ENCODE measurements at regions of chr6 and their contacts with region 1.

Region 1: GRCh38 chr6:138537106-138537505 is 37.8 kb upstream of the NHSL1 start:
- H3K4me3 ChIP-seq: no peak overlapping the region
- H3K27ac ChIP-seq: no peak overlapping the region
- H3K4me1 ChIP-seq: 0 out of 2 replicates have a peak, but pooled peaks cover 3% of the 10 kb centered on the region
- CTCF ChIP-seq: no peak

Region 2: DNA sequence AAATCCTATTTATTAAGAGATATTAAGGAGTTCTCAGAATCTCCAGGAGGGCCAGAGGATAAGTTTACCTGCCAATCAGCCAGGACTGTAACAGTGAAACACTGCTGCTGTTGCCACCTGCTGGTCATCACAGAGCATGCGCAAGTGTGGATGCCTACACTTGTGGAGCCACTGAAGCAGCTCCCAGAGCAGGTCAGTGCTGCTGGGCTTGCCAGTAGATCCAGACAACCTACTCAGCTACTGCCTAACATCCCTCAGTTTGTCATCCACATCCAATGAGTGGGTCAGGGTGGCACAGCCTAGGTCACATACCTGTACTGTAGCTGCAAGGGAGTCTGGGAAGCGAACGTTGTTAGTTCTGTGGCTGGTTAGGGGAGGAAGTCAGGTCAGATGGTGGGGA is 19.5 kb before region 1 on chr6:
- CTCF ChIA-PET with region 1: interaction called, 12 read pairs
- POLR2A ChIA-PET with region 1: no interaction called
- H3K4me3 ChIP-seq: no peak overlapping the region
- H3K27ac ChIP-seq: no peak overlapping the region
- H3K4me1 ChIP-seq: no peaks in the 10 kb centered on the region
- CTCF ChIP-seq: no peak

Region 3: GRCh38 chr6:138560130-138560860 is 23.2 kb after region 1 on chr6:
- CTCF ChIA-PET with region 1: no interaction called
- POLR2A ChIA-PET with region 1: no interaction called
- H3K4me3 ChIP-seq: no peak overlapping the region
- H3K27ac ChIP-seq: no peak overlapping the region
- H3K4me1 ChIP-seq: peaks cover 13% of the 10 kb centered on the region
- CTCF ChIP-seq: no peak